Naive thymus-derived CD4-positive, alpha-beta T cell (primary cell): ENCODE measurements at regions of chr6 and their contacts with region 1.

Region 1: GRCh38 chr6:36765594-36766398 is 68.2 kb downstream of the RAB44 start:
- DNase-seq: peak; percentile 66 to 83 (median 78)
- ATAC-seq: peak; percentile 94
- H3K4me3 ChIP-seq: no peak overlapping the region
- H3K4me3 Mint-ChIP-seq: peak overlapping the region in 2 of 10 donors; percentile 16 to 25
- H3K27ac ChIP-seq: no peak overlapping the region
- H3K27ac Mint-ChIP-seq: peak overlapping the region; percentile 13 to 80 (median 56)
- H3K4me1 ChIP-seq: peaks cover 21 to 33% of the 10 kb centered on the region in 2 donors
- H3K4me1 Mint-ChIP-seq: peaks cover 28 to 42% (median 32%) of the 10 kb centered on the region in 7 donors
- H3K27me3 ChIP-seq: no peaks in the 10 kb centered on the region
- H3K27me3 Mint-ChIP-seq: no peaks in the 10 kb centered on the region

Region 2: DNA sequence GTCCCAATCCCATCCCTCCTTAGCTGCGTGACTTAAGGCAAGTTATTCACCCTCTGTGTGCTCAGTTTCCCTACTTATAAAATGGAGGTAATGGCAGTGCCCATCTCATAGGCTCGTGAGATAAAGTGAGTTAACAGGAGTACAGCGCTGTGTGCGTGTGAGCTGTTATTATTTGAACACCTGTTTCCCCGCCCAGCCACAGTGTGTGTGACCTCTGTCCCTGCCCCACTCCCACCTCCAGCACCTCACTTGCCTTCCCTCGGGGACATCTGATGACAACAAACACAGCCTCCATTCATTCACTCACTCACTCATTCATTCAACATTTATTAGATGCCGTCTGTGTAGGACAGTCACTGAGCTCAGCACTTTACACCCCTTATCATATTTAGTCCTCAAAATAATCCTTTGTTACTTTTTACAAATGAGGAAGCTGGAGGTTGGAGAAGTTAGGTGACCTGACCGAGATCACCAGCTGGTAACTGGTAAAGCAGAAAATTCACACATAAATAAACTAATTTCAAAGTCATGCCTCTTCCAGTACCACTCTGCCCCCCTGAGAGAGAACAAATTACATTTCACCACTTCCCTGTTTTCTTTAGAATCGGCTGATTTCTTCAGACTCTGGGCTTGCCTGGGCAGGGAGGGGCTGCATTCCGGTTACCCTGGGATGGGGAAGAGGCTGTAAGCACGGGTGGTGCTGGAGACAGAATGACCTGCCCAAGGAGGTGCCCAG is 14.8 kb after region 1 on chr6:
- CTCF ChIA-PET with region 1: interaction called, 39 read pairs
- POLR2A ChIA-PET with region 1: interaction called, 4 read pairs
- intact Hi-C with region 1: loop called (anchors 1 kb)
- DNase-seq: no peak
- ATAC-seq: peak; percentile 31
- H3K4me3 ChIP-seq: no peak overlapping the region
- H3K4me3 Mint-ChIP-seq: no peak overlapping the region
- H3K27ac ChIP-seq: no peak overlapping the region
- H3K27ac Mint-ChIP-seq: peak overlapping the region in 2 of 9 donors; percentile 26 to 77
- H3K4me1 ChIP-seq: no peaks in the 10 kb centered on the region
- H3K4me1 Mint-ChIP-seq: peaks cover 0 to 11% (median 5%) of the 10 kb centered on the region in 7 donors
- H3K27me3 ChIP-seq: no peaks in the 10 kb centered on the region
- H3K27me3 Mint-ChIP-seq: peaks cover 0 to 22% (median 0%) of the 10 kb centered on the region in 5 donors

Region 3: DNA sequence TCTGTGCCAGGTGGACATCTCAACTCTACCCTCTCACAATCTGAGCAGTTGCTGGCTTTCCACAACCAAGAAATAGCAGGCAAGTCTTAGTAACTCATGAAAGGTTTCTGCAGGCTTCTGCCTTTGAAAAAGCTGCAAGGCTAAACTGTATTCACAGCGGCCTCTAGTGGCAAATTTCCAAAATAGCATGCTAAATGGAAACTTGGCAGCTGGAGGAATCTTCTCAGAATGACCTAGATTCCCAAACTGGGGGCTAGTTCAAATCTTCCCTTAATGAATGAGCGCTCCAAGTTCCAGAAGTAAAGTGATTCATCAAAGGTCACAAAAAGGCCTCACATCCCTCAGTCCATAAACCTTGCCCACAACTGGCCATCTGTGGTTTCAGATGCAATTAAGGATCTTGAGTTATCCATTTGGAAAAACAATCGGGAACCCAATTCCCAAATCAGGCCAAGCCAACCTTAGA is 85.4 kb after region 1 on chr6:
- CTCF ChIA-PET with region 1: interaction called, 16 read pairs
- POLR2A ChIA-PET with region 1: no interaction called
- intact Hi-C with region 1: loop called (anchors 1 kb)
- DNase-seq: peak in 5 of 9 donors; percentile 38 to 54 (median 44)
- ATAC-seq: no peak
- H3K4me3 ChIP-seq: no peak overlapping the region
- H3K4me3 Mint-ChIP-seq: no peak overlapping the region
- H3K27ac ChIP-seq: no peak overlapping the region
- H3K27ac Mint-ChIP-seq: no peak overlapping the region
- H3K4me1 ChIP-seq: no peaks in the 10 kb centered on the region
- H3K4me1 Mint-ChIP-seq: peaks cover 0 to 13% (median 7%) of the 10 kb centered on the region in 7 donors
- H3K27me3 ChIP-seq: no peaks in the 10 kb centered on the region
- H3K27me3 Mint-ChIP-seq: peaks cover 0 to 5% (median 5%) of the 10 kb centered on the region in 5 donors

Region 4: GRCh38 chr6:36874443-36875249 is 108.8 kb after region 1 on chr6 and contains the start of gene PPIL1:
- CTCF ChIA-PET with region 1: interaction called, 3 read pairs
- POLR2A ChIA-PET with region 1: no interaction called
- intact Hi-C with region 1: loop called in 1 of 2 experiments (anchors 1 kb)
- DNase-seq: peak; percentile 75 to 92 (median 90)
- ATAC-seq: peak; percentile 92
- H3K4me3 ChIP-seq: peak within 1 kb of the TSS; percentile 92
- H3K4me3 Mint-ChIP-seq: peak within 1 kb of the TSS; percentile 85 to 100 (median 98)
- H3K27ac ChIP-seq: peak within 1 kb of the TSS; percentile 87
- H3K27ac Mint-ChIP-seq: peak within 1 kb of the TSS; percentile 97 to 100 (median 98)
- H3K4me1 ChIP-seq: peaks cover 8 to 21% of the 10 kb centered on the region in 2 donors
- H3K4me1 Mint-ChIP-seq: peaks cover 13 to 54% (median 47%) of the 10 kb centered on the region in 7 donors
- H3K27me3 ChIP-seq: no peaks in the 10 kb centered on the region
- H3K27me3 Mint-ChIP-seq: peaks cover 0 to 7% (median 5%) of the 10 kb centered on the region in 5 donors
- total RNA-seq, gene PPIL1: 3.5 to 34.7 (median 10.3) TPM

Region 5: GRCh38 chr6:36979347-36979742 is 213.5 kb after region 1 on chr6:
- CTCF ChIA-PET with region 1: interaction called, 4 read pairs
- POLR2A ChIA-PET with region 1: no interaction called
- intact Hi-C with region 1: loop called in 1 of 2 experiments (anchors 1 kb)
- DNase-seq: peak in 6 of 9 donors; percentile 36 to 62 (median 48)
- ATAC-seq: peak; percentile 70
- H3K4me3 ChIP-seq: no peak overlapping the region
- H3K4me3 Mint-ChIP-seq: peak overlapping the region in 2 of 10 donors; percentile 2 to 20
- H3K27ac ChIP-seq: no peak overlapping the region
- H3K27ac Mint-ChIP-seq: peak overlapping the region; percentile 44 to 88 (median 80)
- H3K4me1 ChIP-seq: peaks cover 13 to 20% of the 10 kb centered on the region in 2 donors
- H3K4me1 Mint-ChIP-seq: peaks cover 0 to 33% (median 27%) of the 10 kb centered on the region in 7 donors
- H3K27me3 ChIP-seq: no peaks in the 10 kb centered on the region
- H3K27me3 Mint-ChIP-seq: no peaks in the 10 kb centered on the region

Region 6: DNA sequence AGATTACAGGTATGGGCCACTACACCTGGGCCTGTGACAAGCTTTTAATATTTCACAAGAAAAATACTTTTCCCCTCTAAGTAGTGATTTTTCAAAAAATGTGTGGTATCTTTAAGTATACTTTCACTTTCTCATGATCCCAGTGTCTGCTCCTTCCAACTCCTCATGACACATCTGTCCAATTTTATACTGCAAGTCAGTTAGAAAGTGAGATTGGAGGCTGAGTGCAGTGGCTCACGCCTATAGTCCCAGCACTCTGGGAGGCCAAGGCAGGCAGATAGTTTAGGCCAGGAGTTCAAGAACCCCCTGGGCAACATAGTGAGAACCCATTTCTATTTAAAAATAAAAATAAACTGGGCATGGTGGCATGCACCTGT is 424.4 kb after region 1 on chr6:
- CTCF ChIA-PET with region 1: no interaction called
- POLR2A ChIA-PET with region 1: no interaction called
- intact Hi-C with region 1: no loop called
- DNase-seq: no peak
- ATAC-seq: no peak
- H3K4me3 ChIP-seq: no peak overlapping the region
- H3K4me3 Mint-ChIP-seq: peak overlapping the region in 8 of 10 donors; percentile 18 to 67 (median 26)
- H3K27ac ChIP-seq: no peak overlapping the region
- H3K27ac Mint-ChIP-seq: peak overlapping the region in 6 of 9 donors; percentile 30 to 81 (median 56)
- H3K4me1 ChIP-seq: peaks cover 28 to 30% of the 10 kb centered on the region in 2 donors
- H3K4me1 Mint-ChIP-seq: peaks cover 30 to 75% (median 66%) of the 10 kb centered on the region in 7 donors
- H3K27me3 ChIP-seq: no peaks in the 10 kb centered on the region
- H3K27me3 Mint-ChIP-seq: no peaks in the 10 kb centered on the region